Esophagus muscularis mucosa (tissue), 4 donors: ENCODE measurements at regions of chr12 and their contacts with region 1.

Region 1: GRCh38 chr12:57111031-57111734 is at the start of gene STAT6:
- DNase-seq: peak; percentile 96
- H3K4me3 ChIP-seq: peak within 1 kb of the TSS; percentile 67 to 82 (median 76)
- H3K27ac ChIP-seq: peak within 1 kb of the TSS; percentile 98 to 99 (median 98)
- H3K4me1 ChIP-seq: peaks cover 17 to 56% (median 50%) of the 10 kb centered on the region in 4 donors
- H3K27me3 ChIP-seq: no peaks in the 10 kb centered on the region
- CTCF ChIP-seq: no peak
- EP300 ChIP-seq: no peak
- POLR2A ChIP-seq: peak; percentile 38
- total RNA-seq, gene STAT6: 111 to 168 (median 157) TPM

Region 2: DNA sequence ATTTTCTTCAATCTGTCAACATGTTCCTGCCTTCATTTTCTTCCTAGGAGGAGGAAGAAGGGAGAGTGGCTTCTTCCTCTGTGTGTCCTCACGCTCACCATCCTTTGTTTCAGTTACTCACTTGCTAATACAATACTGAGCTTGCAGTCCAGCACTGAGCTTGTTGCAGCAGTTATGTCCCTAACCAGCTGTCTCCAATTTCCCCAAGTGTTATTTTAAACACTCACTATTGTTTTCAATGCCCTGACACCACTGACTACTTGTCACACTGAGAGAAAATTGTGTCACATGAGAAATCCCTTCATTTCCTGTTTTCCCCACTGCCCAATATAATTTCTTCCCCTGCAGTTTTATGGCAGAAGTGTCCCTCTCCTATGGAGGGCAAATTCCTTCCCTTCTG is 294.7 kb before region 1 on chr12:
- intact Hi-C with region 1: no loop called
- DNase-seq: no peak
- H3K4me3 ChIP-seq: no peak overlapping the region
- H3K27ac ChIP-seq: no peak overlapping the region
- H3K4me1 ChIP-seq: no peaks in the 10 kb centered on the region
- H3K27me3 ChIP-seq: no peaks in the 10 kb centered on the region
- CTCF ChIP-seq: no peak
- EP300 ChIP-seq: no peak
- POLR2A ChIP-seq: no peak

Region 3: GRCh38 chr12:57005980-57006808 is 105.0 kb before region 1 on chr12 and contains the start of gene ZBTB39:
- intact Hi-C with region 1: loop called (anchors 5 kb)
- DNase-seq: no peak
- H3K4me3 ChIP-seq: peak within 1 kb of the TSS; percentile 95 to 98 (median 96)
- H3K27ac ChIP-seq: peak within 1 kb of the TSS; percentile 89 to 91 (median 89)
- H3K4me1 ChIP-seq: peaks cover 16 to 45% (median 39%) of the 10 kb centered on the region in 4 donors
- H3K27me3 ChIP-seq: no peaks in the 10 kb centered on the region
- CTCF ChIP-seq: peak; percentile 54 to 61 (median 57)
- EP300 ChIP-seq: no peak
- POLR2A ChIP-seq: no peak
- total RNA-seq, gene ZBTB39: 5.0 to 9.1 (median 7.1) TPM

Region 4: DNA sequence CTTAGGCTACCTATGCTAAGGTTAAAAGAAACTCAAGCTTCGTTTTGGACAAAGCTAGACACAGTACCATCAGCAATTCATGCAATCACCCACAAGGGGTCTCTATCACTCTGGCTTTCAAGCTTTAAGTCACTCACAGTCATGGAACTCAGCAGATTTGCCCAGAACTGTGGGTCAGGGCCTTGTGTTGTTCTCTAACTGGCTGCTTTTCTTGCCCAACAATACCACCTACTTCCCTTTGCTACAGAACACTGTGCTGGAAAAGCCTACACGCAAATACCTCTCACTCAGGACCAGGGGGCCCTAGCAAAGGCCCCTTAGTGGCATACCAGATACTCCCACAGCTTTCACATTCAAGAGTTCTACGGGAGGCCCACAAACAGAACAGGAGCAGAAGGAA is 41.7 kb before region 1 on chr12:
- intact Hi-C with region 1: loop called (anchors 1 kb)
- DNase-seq: no peak
- H3K4me3 ChIP-seq: no peak overlapping the region
- H3K27ac ChIP-seq: peak overlapping the region; percentile 75 to 82 (median 78)
- H3K4me1 ChIP-seq: peaks cover 0 to 31% (median 28%) of the 10 kb centered on the region in 4 donors
- H3K27me3 ChIP-seq: no peaks in the 10 kb centered on the region
- CTCF ChIP-seq: peak; percentile 93 to 96 (median 93)
- EP300 ChIP-seq: no peak
- POLR2A ChIP-seq: no peak

Region 5: GRCh38 chr12:57088459-57089248 is 22.5 kb before region 1 on chr12 and contains the start of gene NAB2:
- intact Hi-C with region 1: loop called (anchors 2 kb)
- DNase-seq: peak; percentile 98
- H3K4me3 ChIP-seq: peak within 1 kb of the TSS; percentile 88 to 96 (median 92)
- H3K27ac ChIP-seq: peak within 1 kb of the TSS; percentile 99 to 100 (median 100)
- H3K4me1 ChIP-seq: peaks cover 47 to 65% (median 62%) of the 10 kb centered on the region in 4 donors
- H3K27me3 ChIP-seq: no peaks in the 10 kb centered on the region
- CTCF ChIP-seq: no peak
- EP300 ChIP-seq: no peak
- POLR2A ChIP-seq: peak; percentile 69
- total RNA-seq, gene NAB2: 21.6 to 41.5 (median 35.1) TPM